Activated CD4-positive, alpha-beta T cell treated with anti-CD3 and anti-CD28 coated beads for 36 hours (primary cell): ENCODE measurements at regions of chrX and their contacts with region 1.

Region 1: GRCh38 chrX:110268886-110269285 is 49.0 kb downstream of the AMMECR1 start:
- DNase-seq: no peak
- ATAC-seq: no peak
- H3K4me3 Mint-ChIP-seq: no peak overlapping the region
- H3K27ac Mint-ChIP-seq: peak overlapping the region; percentile 15
- H3K4me1 Mint-ChIP-seq: peaks cover 40% of the 10 kb centered on the region
- H3K27me3 Mint-ChIP-seq: no peaks in the 10 kb centered on the region

Region 2: GRCh38 chrX:110167952-110168451 is 100.9 kb before region 1 on chrX:
- CTCF ChIA-PET with region 1: no interaction called
- POLR2A ChIA-PET with region 1: no interaction called
- intact Hi-C with region 1: loop called in 1 of 2 experiments (anchors 5 kb)
- DNase-seq: peak; percentile 69
- ATAC-seq: peak; percentile 66
- H3K4me3 Mint-ChIP-seq: no peak overlapping the region
- H3K27ac Mint-ChIP-seq: no peak overlapping the region
- H3K4me1 Mint-ChIP-seq: peaks cover 5% of the 10 kb centered on the region
- H3K27me3 Mint-ChIP-seq: no peaks in the 10 kb centered on the region

Region 3: DNA sequence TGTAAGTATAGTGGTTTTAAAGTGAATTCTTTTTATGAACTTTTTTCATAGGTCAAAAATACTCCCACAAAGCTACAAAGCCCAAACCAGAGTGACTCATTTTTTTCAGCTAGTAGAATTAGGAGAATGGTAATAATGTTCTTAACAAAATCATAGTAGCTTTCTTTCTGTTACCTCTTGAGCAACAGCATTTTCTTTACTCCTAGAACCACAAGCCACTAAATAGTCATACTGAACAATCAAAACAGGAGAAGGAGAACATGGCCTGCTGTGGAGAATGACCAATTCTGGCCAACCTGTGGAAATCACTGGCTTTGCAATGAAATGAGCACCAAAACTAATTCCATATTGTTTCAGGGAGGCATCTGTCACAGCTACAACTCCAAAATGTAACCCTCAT is 63.9 kb before region 1 on chrX:
- CTCF ChIA-PET with region 1: interaction called, 3 read pairs
- POLR2A ChIA-PET with region 1: interaction called, 3 read pairs
- intact Hi-C with region 1: loop called in 1 of 2 experiments (anchors 10 kb)
- DNase-seq: no peak
- ATAC-seq: peak; percentile 64
- H3K4me3 Mint-ChIP-seq: no peak overlapping the region
- H3K27ac Mint-ChIP-seq: no peak overlapping the region
- H3K4me1 Mint-ChIP-seq: peaks cover 23% of the 10 kb centered on the region
- H3K27me3 Mint-ChIP-seq: no peaks in the 10 kb centered on the region